Gastrocnemius medialis (tissue), 4 donors: ENCODE measurements at regions of chr17 and their contacts with region 1.

Region 1: DNA sequence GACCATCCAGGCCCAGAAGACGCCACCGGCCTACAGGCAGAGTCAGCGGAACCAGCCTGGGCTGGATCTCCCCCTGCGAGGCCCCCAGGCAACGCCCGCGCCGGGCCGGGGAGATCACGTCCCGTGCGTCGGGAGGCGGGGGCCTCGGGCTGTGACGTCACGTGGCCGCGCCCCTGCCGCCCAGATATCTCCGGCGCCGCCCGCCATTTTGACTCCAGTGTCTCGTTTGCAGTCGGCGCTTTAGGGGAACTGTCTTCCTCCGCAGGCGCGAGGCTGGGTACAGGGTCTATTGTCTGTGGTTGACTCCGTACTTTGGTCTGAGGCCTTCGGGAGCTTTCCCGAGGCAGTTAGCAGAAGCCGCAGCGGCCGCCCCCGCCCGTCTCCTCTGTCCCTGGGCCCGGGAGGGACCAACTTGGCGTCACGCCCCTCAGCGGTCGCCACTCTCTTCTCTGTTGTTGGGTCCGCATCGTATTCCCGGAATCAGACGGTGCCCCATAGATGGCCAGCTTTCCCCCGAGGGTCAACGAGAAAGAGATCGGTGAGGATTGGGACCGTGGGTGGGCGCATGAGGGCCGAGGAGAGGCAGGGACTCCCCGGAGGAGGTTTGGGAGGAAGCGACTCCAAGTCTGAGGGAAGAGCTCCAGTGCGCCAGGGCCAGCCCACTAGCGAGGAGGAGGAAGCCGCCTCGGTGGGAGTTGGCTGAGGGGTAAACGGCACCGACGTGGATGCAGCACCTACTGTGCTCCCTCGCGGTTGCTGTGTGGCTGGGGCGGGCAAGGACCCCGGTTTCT is at the start of gene WSB1:
- DNase-seq: peak; percentile 81 to 86
- ATAC-seq: peak; percentile 85 to 88
- H3K4me3 ChIP-seq: peak within 1 kb of the TSS; percentile 84 to 94 (median 86)
- H3K27ac ChIP-seq: peak within 1 kb of the TSS; percentile 96 to 99 (median 98)
- H3K4me1 ChIP-seq: peaks cover 37 to 40% of the 10 kb centered on the region in 2 donors
- H3K27me3 ChIP-seq: no peaks in the 10 kb centered on the region
- CTCF ChIP-seq: peak in 1 of 5 experiments; percentile 12
- POLR2A ChIP-seq: peak; percentile 97 to 99
- total RNA-seq, gene WSB1: 15.8 to 48.1 (median 20.4) TPM

Region 2: DNA sequence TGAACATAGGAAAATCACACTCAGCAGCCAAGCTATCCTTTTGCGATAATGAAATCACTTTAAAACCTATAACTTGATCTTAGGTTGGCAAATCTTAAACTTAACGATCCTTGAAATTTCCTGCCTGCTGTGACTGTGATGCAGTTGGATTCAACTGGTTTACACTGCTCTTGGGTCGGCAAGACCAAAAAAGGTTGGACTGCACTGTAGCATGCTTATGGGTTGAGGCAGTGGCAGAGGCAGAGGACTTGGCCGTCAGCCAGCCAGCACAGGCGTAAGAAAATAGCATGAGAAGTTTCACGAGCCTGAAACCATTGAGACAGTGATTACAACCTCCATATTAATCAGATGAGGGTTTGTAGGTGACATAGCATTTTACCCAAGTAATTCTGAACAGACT is 21.2 kb after region 1 on chr17:
- in situ Hi-C with region 1: no loop called
- intact Hi-C with region 1: loop called (anchors 2 kb)
- DNase-seq: peak; percentile 75 to 82
- ATAC-seq: peak; percentile 40 to 58
- H3K4me3 ChIP-seq: no peak overlapping the region
- H3K27ac ChIP-seq: peak overlapping the region; percentile 69 to 86 (median 84)
- H3K4me1 ChIP-seq: peaks cover 27 to 38% of the 10 kb centered on the region in 2 donors
- H3K27me3 ChIP-seq: no peaks in the 10 kb centered on the region
- CTCF ChIP-seq: no peak
- POLR2A ChIP-seq: no peak

Region 3: DNA sequence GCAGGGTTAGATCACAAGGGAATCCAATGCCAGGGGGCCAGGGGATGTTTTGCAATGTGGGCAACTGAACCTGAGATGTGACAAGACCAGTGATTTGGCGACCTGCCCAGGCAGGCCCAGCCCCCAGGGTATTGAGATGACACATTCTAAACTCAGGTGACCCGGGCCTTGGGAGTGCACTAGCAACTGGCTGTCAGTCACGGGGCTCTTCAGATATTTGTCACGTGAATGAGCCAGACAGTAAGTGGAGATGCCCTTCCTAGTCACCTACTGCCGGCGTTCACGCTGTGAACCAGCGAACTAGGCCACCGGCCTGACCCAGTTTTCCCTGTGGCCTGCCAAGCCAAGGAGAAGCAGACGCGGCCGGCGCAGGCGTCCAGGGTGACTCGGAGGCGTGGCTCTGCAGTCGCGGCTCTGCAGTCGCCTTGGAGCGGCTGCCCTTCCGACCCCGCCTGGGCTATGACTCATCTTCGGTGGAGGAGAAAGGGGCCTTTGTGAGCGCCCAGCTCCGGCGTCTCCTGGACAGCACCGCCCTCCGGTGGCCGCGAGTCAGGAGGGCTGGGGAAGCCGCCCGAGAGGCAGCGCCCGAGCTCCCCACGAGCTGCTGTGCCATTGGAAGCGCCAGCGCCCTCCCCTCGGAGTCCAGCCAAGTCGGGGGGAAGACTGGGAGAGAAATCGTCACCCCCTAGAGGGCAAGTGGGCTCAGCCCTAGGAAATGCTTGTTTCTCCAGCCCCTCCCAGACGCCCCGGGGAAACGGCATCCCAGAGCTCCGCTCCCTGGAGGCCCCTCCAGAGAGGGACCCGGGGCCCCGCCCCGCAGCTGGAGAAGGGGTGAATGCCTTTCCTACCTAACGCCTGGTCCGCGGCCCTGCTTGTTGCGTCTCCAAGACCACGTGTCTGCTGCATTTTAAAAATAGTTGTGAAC is 38.7 kb after region 1 on chr17:
- in situ Hi-C with region 1: no loop called
- intact Hi-C with region 1: loop called (anchors 1 kb)
- DNase-seq: peak; percentile 97 to 99
- ATAC-seq: peak; percentile 89 to 91
- H3K4me3 ChIP-seq: peak overlapping the region; percentile 48 to 57 (median 52)
- H3K27ac ChIP-seq: peak overlapping the region; percentile 89 to 95 (median 94)
- H3K4me1 ChIP-seq: peaks cover 16 to 17% of the 10 kb centered on the region in 2 donors
- H3K27me3 ChIP-seq: no peaks in the 10 kb centered on the region
- CTCF ChIP-seq: peak; percentile 93 to 97 (median 94)
- POLR2A ChIP-seq: peak; percentile 36 to 56